ENCODE measurements at regions of chr5 and their contacts with region 1.

Region 1: GRCh38 chr5:135829681-135830383 is 4.6 kb upstream of the SLC25A48 start:
- DNase-seq: peak; percentile 35
- H3K4me3 ChIP-seq: no peak overlapping the region
- H3K27ac ChIP-seq: no peak overlapping the region
- H3K4me1 ChIP-seq: peaks cover 5% of the 10 kb centered on the region
- H3K27me3 ChIP-seq: peaks cover 4% of the 10 kb centered on the region
- CTCF ChIP-seq: peak; percentile 83 to 87

Region 2: DNA sequence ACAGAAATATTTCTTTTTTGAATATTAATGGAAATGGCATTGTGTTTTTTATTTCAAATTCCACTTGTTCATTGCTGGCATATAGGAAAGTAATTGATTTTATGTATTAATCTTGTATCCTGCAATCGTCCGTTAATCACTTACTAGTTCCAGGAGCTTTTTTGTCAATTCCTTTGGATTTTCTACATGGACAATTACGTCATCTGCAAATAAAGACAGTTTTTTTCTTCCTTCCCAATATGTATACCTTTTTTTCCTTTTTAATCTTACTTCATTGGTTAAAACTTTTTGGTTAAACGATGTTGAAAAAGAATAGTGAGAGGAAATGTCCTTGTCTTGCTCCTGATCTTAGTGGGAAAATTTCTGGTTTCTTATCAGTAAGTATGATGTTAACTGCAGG is 376.2 kb before region 1 on chr5:
- CTCF ChIA-PET with region 1: no interaction called
- dilution Hi-C with region 1: no loop called
- in situ Hi-C with region 1: no loop called
- intact Hi-C with region 1: no loop called
- DNase-seq: no peak
- H3K4me3 ChIP-seq: no peak overlapping the region
- H3K27ac ChIP-seq: no peak overlapping the region
- H3K4me1 ChIP-seq: peaks cover 18% of the 10 kb centered on the region
- H3K27me3 ChIP-seq: no peaks in the 10 kb centered on the region
- CTCF ChIP-seq: no peak

Region 3: DNA sequence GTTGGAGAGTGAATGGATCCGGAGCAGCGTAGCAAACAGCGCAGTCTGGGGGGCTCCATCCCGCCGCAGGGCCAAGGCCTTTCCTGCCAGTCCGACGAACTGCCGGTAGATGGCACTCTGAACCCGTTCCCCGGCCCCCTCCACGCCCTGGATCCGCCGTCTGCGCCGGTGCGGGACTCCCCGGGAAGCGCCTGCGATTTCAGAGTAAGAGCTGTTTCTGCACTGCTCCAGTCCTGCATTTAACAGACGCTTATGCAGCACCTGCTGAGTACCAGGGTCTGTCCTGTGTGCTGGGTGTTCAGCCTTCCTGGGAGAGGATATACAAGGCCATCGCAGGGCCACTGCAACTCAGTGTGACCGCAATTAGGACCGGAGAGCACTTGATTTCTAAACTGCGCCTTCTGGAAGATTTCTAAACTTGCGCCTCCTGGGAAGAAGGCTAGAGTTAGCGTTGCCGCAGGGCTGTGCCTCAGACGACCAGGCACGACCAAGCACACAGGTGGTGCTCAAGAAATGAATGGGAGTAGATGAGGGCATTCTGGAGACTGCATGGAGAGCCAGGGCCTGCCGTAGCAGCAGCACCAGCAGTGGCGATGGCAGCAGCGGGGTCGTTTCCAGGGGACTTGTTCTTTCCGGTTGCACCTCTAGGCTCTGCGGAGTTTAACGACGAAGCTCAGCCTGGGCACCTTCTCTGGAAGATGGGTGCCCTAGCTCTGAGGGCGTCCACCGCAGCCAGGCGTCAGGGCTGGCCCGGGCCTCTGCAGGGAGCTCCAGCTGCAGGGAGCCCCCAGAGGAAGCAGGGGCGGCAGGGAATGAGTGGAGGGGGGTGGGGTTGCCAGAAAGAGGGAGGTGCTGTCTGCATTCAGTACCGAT is 363.4 kb before region 1 on chr5:
- CTCF ChIA-PET with region 1: no interaction called
- dilution Hi-C with region 1: loop called (anchors 5 kb)
- in situ Hi-C with region 1: loop called (anchors 10 kb)
- intact Hi-C with region 1: loop called (anchors 1 kb)
- DNase-seq: peak; percentile 42
- H3K4me3 ChIP-seq: no peak overlapping the region
- H3K27ac ChIP-seq: no peak overlapping the region
- H3K4me1 ChIP-seq: no peaks in the 10 kb centered on the region
- H3K27me3 ChIP-seq: no peaks in the 10 kb centered on the region
- CTCF ChIP-seq: peak; percentile 73 to 97

Region 4: DNA sequence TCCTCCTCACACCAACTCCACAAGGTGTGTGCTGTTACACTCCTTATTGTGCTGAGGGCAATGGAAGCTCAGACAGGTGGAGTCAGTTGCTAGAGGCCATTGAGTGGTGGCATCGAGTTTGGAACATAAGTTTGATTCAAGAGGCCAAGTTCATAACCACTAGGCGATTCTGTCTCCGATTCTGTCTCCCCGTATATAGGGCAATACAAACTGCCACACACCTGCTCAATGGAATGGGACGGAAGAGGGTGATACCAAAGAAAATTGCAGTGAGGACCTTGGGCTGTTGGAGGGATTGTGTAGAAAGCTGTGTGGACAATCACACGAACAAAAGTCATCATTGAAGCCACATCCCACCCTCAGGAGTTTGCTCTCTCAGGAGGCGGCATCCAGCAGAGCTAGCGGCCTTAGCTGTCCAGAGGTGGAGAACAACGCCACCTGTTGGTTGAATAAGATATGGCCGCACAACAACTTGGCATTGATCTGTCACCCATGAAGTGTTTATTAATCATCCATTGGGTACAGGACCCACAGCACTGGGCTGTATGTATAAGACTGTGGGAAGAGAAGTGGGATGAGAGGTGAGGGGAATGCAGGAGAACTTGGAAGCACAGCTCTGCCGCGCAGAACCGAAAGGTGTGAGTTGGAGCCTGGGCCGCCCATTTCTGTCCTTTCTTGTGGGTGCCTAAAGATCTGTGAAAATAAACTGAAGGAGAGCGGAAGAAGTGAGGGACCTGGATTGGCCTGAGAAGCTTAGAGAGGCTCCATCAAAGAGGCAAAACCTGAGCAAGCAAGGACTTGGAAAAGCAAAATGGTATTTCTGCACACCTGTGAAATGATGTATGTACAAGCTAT is 278.0 kb before region 1 on chr5:
- CTCF ChIA-PET with region 1: interaction called, 8 read pairs
- dilution Hi-C with region 1: loop called (anchors 5 kb)
- in situ Hi-C with region 1: loop called (anchors 5 kb)
- intact Hi-C with region 1: loop called (anchors 1 kb)
- DNase-seq: peak; percentile 54
- H3K4me3 ChIP-seq: no peak overlapping the region
- H3K27ac ChIP-seq: no peak overlapping the region
- H3K4me1 ChIP-seq: no peaks in the 10 kb centered on the region
- H3K27me3 ChIP-seq: peaks cover 6% of the 10 kb centered on the region
- CTCF ChIP-seq: peak; percentile 82 to 86

Region 5: GRCh38 chr5:135560858-135561257 is 269.0 kb before region 1 on chr5:
- CTCF ChIA-PET with region 1: interaction called, 5 read pairs
- dilution Hi-C with region 1: no loop called
- in situ Hi-C with region 1: loop called in 1 of 2 experiments (anchors 5 kb)
- intact Hi-C with region 1: loop called (anchors 1 kb)
- DNase-seq: peak; percentile 55
- H3K4me3 ChIP-seq: no peak overlapping the region
- H3K27ac ChIP-seq: no peak overlapping the region
- H3K4me1 ChIP-seq: no peaks in the 10 kb centered on the region
- H3K27me3 ChIP-seq: peaks cover under 1% of the 10 kb centered on the region
- CTCF ChIP-seq: peak; percentile 84 to 92

Region 6: DNA sequence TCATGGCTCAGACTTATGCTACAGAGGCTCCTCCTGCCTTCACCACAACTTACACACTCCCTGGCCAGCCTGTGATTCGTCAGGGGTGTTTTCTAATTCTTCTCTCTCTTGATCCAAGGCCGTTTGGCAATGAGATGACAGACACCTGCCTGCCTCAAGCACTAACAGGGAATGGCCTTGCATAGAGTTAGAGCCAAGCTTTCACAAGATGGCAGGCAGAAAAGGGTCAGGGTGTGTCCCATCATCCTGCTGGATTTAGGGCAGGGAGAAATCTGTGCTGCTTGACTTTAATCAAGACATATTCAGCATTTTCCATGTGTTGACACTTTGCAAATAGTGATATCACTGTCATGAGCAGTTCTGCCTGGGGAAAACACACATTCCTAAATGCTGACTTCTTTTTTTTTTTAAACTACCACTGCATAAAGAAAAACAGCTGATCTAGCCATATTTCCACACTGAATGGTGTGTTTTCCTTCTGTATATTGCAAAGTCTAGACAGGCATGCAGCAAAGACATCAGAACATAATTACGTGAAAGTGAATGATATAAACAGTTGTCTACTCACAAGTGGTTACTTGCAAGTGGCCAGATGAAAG is 90.3 kb before region 1 on chr5:
- CTCF ChIA-PET with region 1: no interaction called
- dilution Hi-C with region 1: loop called (anchors 5 kb)
- in situ Hi-C with region 1: loop called (anchors 10 to 25 kb)
- intact Hi-C with region 1: loop called (anchors 1 kb)
- DNase-seq: peak; percentile 31
- H3K4me3 ChIP-seq: no peak overlapping the region
- H3K27ac ChIP-seq: no peak overlapping the region
- H3K4me1 ChIP-seq: no peaks in the 10 kb centered on the region
- H3K27me3 ChIP-seq: no peaks in the 10 kb centered on the region
- CTCF ChIP-seq: no peak